Right ventricle myocardium superior (tissue), 1 donor: ENCODE measurements at regions of chr12 and their contacts with region 1.

Region 1: DNA sequence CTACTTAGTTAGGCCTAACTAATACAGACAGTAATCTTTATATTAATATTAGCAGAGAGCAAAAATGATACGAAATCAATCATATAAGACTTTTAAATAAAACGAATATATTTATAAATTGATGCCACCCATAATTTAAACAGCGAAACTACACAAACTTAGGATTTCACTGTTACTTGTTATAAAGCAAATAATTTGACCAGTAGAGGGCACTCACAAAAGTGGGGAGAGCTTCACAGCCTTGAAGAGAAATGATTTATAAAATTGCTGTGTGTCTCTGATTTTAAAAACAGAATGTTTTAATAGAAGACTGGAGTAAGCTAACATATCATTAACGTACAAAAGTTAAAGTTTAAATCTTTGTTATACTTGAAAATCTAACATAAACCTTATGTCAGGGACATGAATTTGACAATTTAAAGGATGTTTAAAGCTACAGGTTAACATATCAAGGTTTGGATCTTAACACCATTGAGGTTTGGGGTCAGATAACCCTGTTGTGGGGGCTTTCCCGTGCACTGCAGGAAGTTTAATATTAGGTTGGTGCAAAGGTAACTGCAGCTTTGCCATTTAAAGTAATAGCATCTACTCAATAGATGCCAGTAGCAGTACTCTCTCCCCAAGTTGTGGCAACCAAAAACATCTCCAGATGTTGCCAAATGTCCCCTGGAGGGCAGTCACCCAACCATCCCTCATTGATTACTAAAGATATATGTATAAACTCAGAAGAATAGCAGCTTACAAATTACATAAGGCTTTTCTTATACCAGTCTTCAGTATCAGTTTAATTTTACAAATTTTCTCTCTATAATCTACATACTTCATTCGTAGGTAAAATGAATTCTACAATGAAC is 9.3 kb downstream of the KRAS start:
- DNase-seq: no peak
- ATAC-seq: peak; percentile 53

Region 2: GRCh38 chr12:25386831-25387731 is 145.7 kb after region 1 on chr12:
- intact Hi-C with region 1: loop called (anchors 1 kb)
- DNase-seq: peak; percentile 84
- ATAC-seq: peak; percentile 66

Region 3: DNA sequence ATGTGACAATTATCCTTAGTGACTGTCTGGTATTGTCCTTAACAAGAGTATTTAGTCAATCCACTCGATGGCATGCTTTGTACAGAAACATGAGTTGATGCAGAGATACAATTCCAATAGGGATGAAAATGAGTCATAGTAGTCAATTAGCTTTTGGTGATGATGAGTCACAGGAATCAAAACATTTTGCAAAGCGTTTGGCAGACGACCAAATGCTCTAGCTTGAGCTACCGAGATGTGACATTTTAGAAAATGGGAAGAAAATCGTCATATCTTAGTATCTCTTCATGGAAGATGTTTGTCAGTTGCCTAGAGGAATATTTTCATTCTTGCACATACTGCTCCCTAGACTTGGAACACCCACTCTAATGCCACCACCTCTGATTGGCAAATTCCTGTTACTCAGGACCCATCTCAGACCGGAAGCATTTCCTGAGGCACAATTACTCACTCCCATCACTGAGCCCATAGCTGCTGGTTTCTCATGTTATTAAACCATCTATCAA is 216.7 kb after region 1 on chr12:
- intact Hi-C with region 1: no loop called
- DNase-seq: no peak
- ATAC-seq: no peak